Naive thymus-derived CD4-positive, alpha-beta T cell (primary cell): ENCODE measurements at regions of chr3 and their contacts with region 1.

Region 1: GRCh38 chr3:157136647-157137387 is 23.1 kb downstream of the CCNL1 start:
- DNase-seq: no peak
- ATAC-seq: no peak
- H3K4me3 ChIP-seq: no peak overlapping the region
- H3K4me3 Mint-ChIP-seq: peak overlapping the region in 2 of 10 donors; percentile 65 to 80
- H3K27ac ChIP-seq: peak overlapping the region; percentile 14
- H3K27ac Mint-ChIP-seq: peak overlapping the region in 7 of 9 donors; percentile 5 to 91 (median 78)
- H3K4me1 ChIP-seq: peaks cover 6 to 31% of the 10 kb centered on the region in 2 donors
- H3K4me1 Mint-ChIP-seq: peaks cover 3 to 65% (median 21%) of the 10 kb centered on the region in 7 donors
- H3K27me3 ChIP-seq: no peaks in the 10 kb centered on the region
- H3K27me3 Mint-ChIP-seq: no peaks in the 10 kb centered on the region

Region 2: DNA sequence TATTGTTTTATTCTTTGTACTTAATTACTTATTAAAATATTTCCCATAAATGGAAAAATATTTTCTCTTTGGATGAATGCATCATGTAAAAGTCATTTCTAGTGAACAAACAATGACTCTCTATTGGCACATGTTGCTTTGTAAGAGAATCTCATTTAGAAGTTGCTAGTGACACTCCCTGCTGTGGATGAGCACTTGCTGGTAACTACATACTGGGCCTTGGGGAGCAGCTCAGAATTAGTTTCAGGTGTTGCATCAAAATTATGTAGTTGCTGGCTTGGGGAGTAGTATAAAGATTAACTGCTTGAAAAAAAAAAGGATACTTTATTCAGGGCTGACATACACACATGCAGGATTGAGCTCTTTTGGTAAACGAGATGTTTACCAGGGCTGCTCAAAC is 1096.8 kb before region 1 on chr3:
- CTCF ChIA-PET with region 1: interaction called, 5 read pairs
- POLR2A ChIA-PET with region 1: no interaction called
- intact Hi-C with region 1: loop called (anchors 5 kb)
- DNase-seq: no peak
- ATAC-seq: no peak
- H3K4me3 ChIP-seq: no peak overlapping the region
- H3K4me3 Mint-ChIP-seq: no peak overlapping the region
- H3K27ac ChIP-seq: no peak overlapping the region
- H3K27ac Mint-ChIP-seq: no peak overlapping the region
- H3K4me1 ChIP-seq: no peaks in the 10 kb centered on the region
- H3K4me1 Mint-ChIP-seq: no peaks in the 10 kb centered on the region
- H3K27me3 ChIP-seq: peaks cover 0 to 3% of the 10 kb centered on the region in 2 donors
- H3K27me3 Mint-ChIP-seq: peaks cover 5 to 20% (median 12%) of the 10 kb centered on the region in 5 donors

Region 3: DNA sequence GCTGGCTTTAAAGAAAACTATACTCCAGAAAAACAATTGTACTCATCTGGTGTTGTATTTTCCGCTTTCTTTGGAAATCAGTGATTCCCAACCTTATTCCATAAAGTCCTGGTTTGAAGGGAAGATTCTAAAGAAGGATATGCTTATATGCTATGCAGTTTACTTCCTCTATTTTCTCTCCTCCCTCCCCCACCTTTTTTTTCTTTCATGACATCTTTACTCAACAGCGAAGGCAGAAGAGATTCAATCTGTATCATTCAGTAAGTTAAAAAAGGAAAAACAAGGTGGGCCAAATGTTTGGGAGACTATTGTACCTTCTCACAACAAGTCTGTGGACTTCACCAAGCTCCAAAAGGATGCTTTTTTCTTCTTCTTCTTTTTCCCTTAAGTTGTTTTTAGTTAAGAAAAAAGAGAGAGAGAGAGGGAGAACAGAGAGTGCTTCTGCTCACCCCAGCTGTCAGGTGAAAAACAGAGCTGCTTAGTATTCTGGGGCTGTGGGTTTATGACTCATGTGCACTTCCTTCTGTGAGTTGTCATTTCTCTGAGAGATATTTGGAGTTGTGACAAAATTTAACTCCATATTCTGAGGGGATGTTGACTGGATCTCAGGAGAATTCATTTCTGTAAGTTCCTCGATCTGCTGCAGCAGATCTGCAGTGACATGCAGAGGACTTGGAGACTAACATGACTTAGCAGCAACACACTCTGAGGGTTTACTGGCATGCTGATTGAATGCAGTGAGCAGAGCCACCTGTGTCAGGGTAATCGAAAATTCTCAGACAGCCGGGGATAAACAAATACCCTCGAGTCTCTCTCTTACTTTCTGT is 652.6 kb before region 1 on chr3:
- CTCF ChIA-PET with region 1: interaction called, 5 read pairs
- POLR2A ChIA-PET with region 1: no interaction called
- intact Hi-C with region 1: loop called in 1 of 2 experiments (anchors 1 kb)
- DNase-seq: peak in 8 of 9 donors; percentile 35 to 68 (median 62)
- ATAC-seq: peak; percentile 88
- H3K4me3 ChIP-seq: peak overlapping the region; percentile 47
- H3K4me3 Mint-ChIP-seq: peak overlapping the region; percentile 52 to 85 (median 74)
- H3K27ac ChIP-seq: peak overlapping the region; percentile 63
- H3K27ac Mint-ChIP-seq: peak overlapping the region; percentile 76 to 95 (median 83)
- H3K4me1 ChIP-seq: peaks cover 21 to 25% of the 10 kb centered on the region in 2 donors
- H3K4me1 Mint-ChIP-seq: peaks cover 14 to 40% (median 35%) of the 10 kb centered on the region in 7 donors
- H3K27me3 ChIP-seq: no peaks in the 10 kb centered on the region
- H3K27me3 Mint-ChIP-seq: peaks cover 0 to 17% (median 0%) of the 10 kb centered on the region in 5 donors

Region 4: GRCh38 chr3:156536524-156537231 is 600.1 kb before region 1 on chr3:
- CTCF ChIA-PET with region 1: interaction called, 4 read pairs
- POLR2A ChIA-PET with region 1: no interaction called
- intact Hi-C with region 1: loop called in 1 of 2 experiments (anchors 1 kb)
- DNase-seq: no peak
- ATAC-seq: no peak
- H3K4me3 ChIP-seq: no peak overlapping the region
- H3K4me3 Mint-ChIP-seq: no peak overlapping the region
- H3K27ac ChIP-seq: no peak overlapping the region
- H3K27ac Mint-ChIP-seq: no peak overlapping the region
- H3K4me1 ChIP-seq: no peaks in the 10 kb centered on the region
- H3K4me1 Mint-ChIP-seq: peaks cover 0 to 14% (median 0%) of the 10 kb centered on the region in 7 donors
- H3K27me3 ChIP-seq: no peaks in the 10 kb centered on the region
- H3K27me3 Mint-ChIP-seq: no peaks in the 10 kb centered on the region

Region 5: GRCh38 chr3:157081681-157082210 is 55.1 kb before region 1 on chr3:
- CTCF ChIA-PET with region 1: interaction called, 13 read pairs
- POLR2A ChIA-PET with region 1: interaction called, 19 read pairs
- intact Hi-C with region 1: no loop called
- DNase-seq: peak; percentile 60 to 86 (median 70)
- ATAC-seq: peak; percentile 96
- H3K4me3 ChIP-seq: no peak overlapping the region
- H3K4me3 Mint-ChIP-seq: no peak overlapping the region
- H3K27ac ChIP-seq: no peak overlapping the region
- H3K27ac Mint-ChIP-seq: peak overlapping the region in 8 of 9 donors; percentile 9 to 79 (median 56)
- H3K4me1 ChIP-seq: peaks cover 0 to 12% of the 10 kb centered on the region in 2 donors
- H3K4me1 Mint-ChIP-seq: peaks cover 0 to 54% (median 6%) of the 10 kb centered on the region in 7 donors
- H3K27me3 ChIP-seq: no peaks in the 10 kb centered on the region
- H3K27me3 Mint-ChIP-seq: no peaks in the 10 kb centered on the region

Region 6: GRCh38 chr3:157220211-157220610 is 83.4 kb after region 1 on chr3:
- CTCF ChIA-PET with region 1: no interaction called
- POLR2A ChIA-PET with region 1: no interaction called
- intact Hi-C with region 1: no loop called
- DNase-seq: no peak
- ATAC-seq: no peak
- H3K4me3 ChIP-seq: no peak overlapping the region
- H3K4me3 Mint-ChIP-seq: no peak overlapping the region
- H3K27ac ChIP-seq: no peak overlapping the region
- H3K27ac Mint-ChIP-seq: no peak overlapping the region
- H3K4me1 ChIP-seq: no peaks in the 10 kb centered on the region
- H3K4me1 Mint-ChIP-seq: peaks cover 0 to 3% (median 0%) of the 10 kb centered on the region in 7 donors
- H3K27me3 ChIP-seq: no peaks in the 10 kb centered on the region
- H3K27me3 Mint-ChIP-seq: peaks cover 0 to 17% (median 0%) of the 10 kb centered on the region in 5 donors

Region 7: GRCh38 chr3:157239082-157239704 is 102.4 kb after region 1 on chr3:
- CTCF ChIA-PET with region 1: interaction called, 7 read pairs
- POLR2A ChIA-PET with region 1: no interaction called
- intact Hi-C with region 1: loop called in 1 of 2 experiments (anchors 1 kb)
- DNase-seq: peak; percentile 42 to 72 (median 58)
- ATAC-seq: peak; percentile 100
- H3K4me3 ChIP-seq: no peak overlapping the region
- H3K4me3 Mint-ChIP-seq: no peak overlapping the region
- H3K27ac ChIP-seq: no peak overlapping the region
- H3K27ac Mint-ChIP-seq: no peak overlapping the region
- H3K4me1 ChIP-seq: no peaks in the 10 kb centered on the region
- H3K4me1 Mint-ChIP-seq: peaks cover 0 to 6% (median 4%) of the 10 kb centered on the region in 7 donors
- H3K27me3 ChIP-seq: no peaks in the 10 kb centered on the region
- H3K27me3 Mint-ChIP-seq: peaks cover 0 to 8% (median 0%) of the 10 kb centered on the region in 5 donors

Region 8: GRCh38 chr3:157300094-157300493 is 163.3 kb after region 1 on chr3:
- CTCF ChIA-PET with region 1: no interaction called
- POLR2A ChIA-PET with region 1: no interaction called
- intact Hi-C with region 1: no loop called
- DNase-seq: no peak
- ATAC-seq: no peak
- H3K4me3 ChIP-seq: no peak overlapping the region
- H3K4me3 Mint-ChIP-seq: no peak overlapping the region
- H3K27ac ChIP-seq: no peak overlapping the region
- H3K27ac Mint-ChIP-seq: no peak overlapping the region
- H3K4me1 ChIP-seq: no peaks in the 10 kb centered on the region
- H3K4me1 Mint-ChIP-seq: no peaks in the 10 kb centered on the region
- H3K27me3 ChIP-seq: no peaks in the 10 kb centered on the region
- H3K27me3 Mint-ChIP-seq: peaks cover 0 to 2% (median 0%) of the 10 kb centered on the region in 5 donors

Region 9: GRCh38 chr3:158185711-158186110 is 1048.9 kb after region 1 on chr3:
- CTCF ChIA-PET with region 1: no interaction called
- POLR2A ChIA-PET with region 1: no interaction called
- intact Hi-C with region 1: no loop called
- DNase-seq: no peak
- ATAC-seq: no peak
- H3K4me3 ChIP-seq: no peak overlapping the region
- H3K4me3 Mint-ChIP-seq: no peak overlapping the region
- H3K27ac ChIP-seq: no peak overlapping the region
- H3K27ac Mint-ChIP-seq: no peak overlapping the region
- H3K4me1 ChIP-seq: no peaks in the 10 kb centered on the region
- H3K4me1 Mint-ChIP-seq: peaks cover 0 to 25% (median 11%) of the 10 kb centered on the region in 7 donors
- H3K27me3 ChIP-seq: no peaks in the 10 kb centered on the region
- H3K27me3 Mint-ChIP-seq: no peaks in the 10 kb centered on the region